Caco-2 (cell line): ENCODE measurements at regions of chr5 and their contacts with region 1.

Region 1: DNA sequence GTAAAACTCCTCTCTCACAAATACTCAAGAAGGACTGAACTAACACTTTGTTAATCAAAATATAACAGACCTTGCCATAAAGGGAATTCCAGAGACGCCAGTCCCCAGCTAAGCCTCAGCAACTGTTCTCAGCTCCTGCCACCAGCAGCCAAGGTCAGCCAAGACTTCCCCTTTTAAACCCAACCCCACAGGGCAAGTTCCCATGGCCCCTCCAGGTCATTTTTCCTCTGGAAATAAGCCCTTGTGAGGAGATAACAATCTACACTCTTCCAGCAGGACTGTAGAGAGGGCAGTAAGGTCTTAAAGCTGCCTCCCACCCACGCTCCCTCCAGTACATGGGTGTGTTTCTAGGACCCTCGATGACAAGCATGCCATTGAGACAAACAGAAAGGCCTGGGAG is 78.3 kb downstream of the DPYSL3 start:
- DNase-seq: peak; percentile 18 to 57
- H3K4me3 ChIP-seq: no peak overlapping the region
- H3K4me3 Mint-ChIP-seq: peak overlapping the region; percentile 57
- H3K27ac Mint-ChIP-seq: peak overlapping the region; percentile 48
- H3K4me1 ChIP-seq: peaks cover 56% of the 10 kb centered on the region
- H3K4me1 Mint-ChIP-seq: peaks cover 55% of the 10 kb centered on the region
- H3K27me3 ChIP-seq: no peaks in the 10 kb centered on the region
- H3K27me3 Mint-ChIP-seq: no peaks in the 10 kb centered on the region
- CTCF ChIP-seq: no peak

Region 2: GRCh38 chr5:147169399-147169798 is 262.2 kb before region 1 on chr5:
- CTCF ChIA-PET with region 1: no interaction called
- POLR2A ChIA-PET with region 1: no interaction called
- intact Hi-C with region 1: loop called (anchors 5 kb)
- DNase-seq: peak in 1 of 2 experiments; percentile 65
- H3K4me3 ChIP-seq: no peak overlapping the region
- H3K4me3 Mint-ChIP-seq: peak overlapping the region; percentile 18
- H3K27ac Mint-ChIP-seq: peak overlapping the region; percentile 97
- H3K4me1 ChIP-seq: peaks cover 69% of the 10 kb centered on the region
- H3K4me1 Mint-ChIP-seq: peaks cover 59% of the 10 kb centered on the region
- H3K27me3 ChIP-seq: no peaks in the 10 kb centered on the region
- H3K27me3 Mint-ChIP-seq: no peaks in the 10 kb centered on the region
- CTCF ChIP-seq: no peak

Region 3: DNA sequence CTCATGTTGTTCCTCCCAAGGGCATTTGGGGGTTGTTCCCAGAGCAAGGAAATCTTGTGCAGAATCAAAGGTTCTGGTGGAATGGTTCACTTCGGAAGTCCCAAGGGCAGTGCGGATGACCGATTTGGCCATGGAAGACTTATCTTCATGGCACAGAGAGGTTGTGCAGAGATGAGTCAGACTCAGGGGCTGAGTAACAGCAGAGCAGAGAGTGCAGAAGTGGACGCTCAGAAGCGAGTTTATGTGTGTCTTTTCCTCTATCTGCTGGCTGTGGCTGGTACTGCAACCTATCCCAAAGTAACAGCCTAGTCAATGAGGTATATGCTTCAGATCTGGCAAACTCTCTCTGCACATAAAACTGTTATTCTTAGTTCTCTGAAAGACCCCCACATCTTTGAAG is 39.8 kb before region 1 on chr5:
- CTCF ChIA-PET with region 1: no interaction called
- POLR2A ChIA-PET with region 1: no interaction called
- intact Hi-C with region 1: loop called (anchors 5 kb)
- DNase-seq: peak; percentile 47 to 54
- H3K4me3 ChIP-seq: no peak overlapping the region
- H3K4me3 Mint-ChIP-seq: no peak overlapping the region
- H3K27ac Mint-ChIP-seq: no peak overlapping the region
- H3K4me1 ChIP-seq: peaks cover 35% of the 10 kb centered on the region
- H3K4me1 Mint-ChIP-seq: peaks cover 36% of the 10 kb centered on the region
- H3K27me3 ChIP-seq: no peaks in the 10 kb centered on the region; the same call in 1 of the 2 replicates
- H3K27me3 Mint-ChIP-seq: no peaks in the 10 kb centered on the region
- CTCF ChIP-seq: peak; percentile 57 to 61

Region 4: DNA sequence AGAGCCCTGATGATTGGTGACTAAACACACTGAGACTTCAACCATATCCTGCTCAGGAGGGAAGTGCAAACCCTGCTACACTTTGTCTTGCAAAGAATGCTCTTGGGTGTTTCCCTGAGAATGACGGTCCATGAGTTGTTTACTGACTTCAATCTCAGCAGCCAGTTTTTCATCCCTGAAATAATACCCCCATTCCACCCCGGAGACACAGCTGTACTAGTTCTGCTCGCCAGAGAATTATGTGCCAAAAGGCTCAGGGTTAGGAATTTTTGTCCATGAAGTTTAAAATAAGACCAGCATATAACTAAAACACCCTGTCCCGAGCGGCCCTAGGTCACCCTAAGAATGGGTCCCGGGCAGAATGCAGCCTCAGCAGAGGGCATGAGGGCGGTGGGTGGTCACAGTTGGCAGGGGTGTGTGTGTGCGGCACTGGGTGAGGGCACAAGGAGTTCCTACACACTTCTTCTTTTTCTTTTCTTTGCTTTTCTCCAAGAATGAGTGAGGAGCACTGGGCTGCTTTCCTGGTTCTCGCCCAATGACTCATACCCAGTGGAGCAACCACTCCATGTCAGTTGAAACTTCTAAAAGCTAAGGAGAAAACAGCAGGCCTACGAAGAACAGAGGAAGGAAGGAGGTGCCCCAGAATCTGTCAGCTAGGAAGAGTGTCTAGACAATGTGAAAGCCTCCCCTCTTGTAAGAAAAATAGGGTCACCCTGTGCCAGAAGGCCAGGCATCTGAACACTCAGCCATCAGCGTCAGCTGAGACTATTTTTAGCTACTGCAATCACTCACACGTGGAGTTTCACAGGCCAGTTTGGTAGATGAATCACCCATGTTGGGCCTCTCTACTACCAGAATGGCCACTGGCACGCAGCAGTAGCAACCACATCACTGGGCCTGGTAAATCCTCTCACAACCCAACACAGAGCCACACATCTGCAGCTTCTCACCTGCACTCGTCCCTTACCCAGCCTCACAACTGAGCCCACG is 27.6 kb before region 1 on chr5:
- CTCF ChIA-PET with region 1: interaction called, 5 read pairs
- POLR2A ChIA-PET with region 1: interaction called, 3 read pairs
- intact Hi-C with region 1: loop called (anchors 1 kb)
- DNase-seq: no peak
- H3K4me3 ChIP-seq: no peak overlapping the region
- H3K4me3 Mint-ChIP-seq: no peak overlapping the region
- H3K27ac Mint-ChIP-seq: peak overlapping the region; percentile 74
- H3K4me1 ChIP-seq: peaks cover 83% of the 10 kb centered on the region
- H3K4me1 Mint-ChIP-seq: peaks cover 43% of the 10 kb centered on the region
- H3K27me3 ChIP-seq: no peaks in the 10 kb centered on the region
- H3K27me3 Mint-ChIP-seq: no peaks in the 10 kb centered on the region
- CTCF ChIP-seq: no peak

Region 5: GRCh38 chr5:147448766-147449165 is 17.2 kb after region 1 on chr5:
- CTCF ChIA-PET with region 1: interaction called, 10 read pairs
- POLR2A ChIA-PET with region 1: interaction called, 4 read pairs
- intact Hi-C with region 1: loop called (anchors 2 kb)
- DNase-seq: no peak
- H3K4me3 ChIP-seq: no peak overlapping the region
- H3K4me3 Mint-ChIP-seq: peak overlapping the region; percentile 51
- H3K27ac Mint-ChIP-seq: peak overlapping the region; percentile 29
- H3K4me1 ChIP-seq: peaks cover 40% of the 10 kb centered on the region
- H3K4me1 Mint-ChIP-seq: peaks cover 32% of the 10 kb centered on the region
- H3K27me3 ChIP-seq: no peaks in the 10 kb centered on the region
- H3K27me3 Mint-ChIP-seq: no peaks in the 10 kb centered on the region
- CTCF ChIP-seq: no peak

Region 6: GRCh38 chr5:147453875-147454814 is 22.6 kb after region 1 on chr5:
- CTCF ChIA-PET with region 1: interaction called, 10 read pairs
- POLR2A ChIA-PET with region 1: interaction called, 4 read pairs
- intact Hi-C with region 1: loop called (anchors 1 kb)
- DNase-seq: peak; percentile 88 to 94
- H3K4me3 ChIP-seq: peak overlapping the region; percentile 92
- H3K4me3 Mint-ChIP-seq: peak overlapping the region; percentile 85
- H3K27ac Mint-ChIP-seq: peak overlapping the region; percentile 73
- H3K4me1 ChIP-seq: peaks cover 29% of the 10 kb centered on the region
- H3K4me1 Mint-ChIP-seq: peaks cover 23% of the 10 kb centered on the region
- H3K27me3 ChIP-seq: no peaks in the 10 kb centered on the region
- H3K27me3 Mint-ChIP-seq: no peaks in the 10 kb centered on the region
- CTCF ChIP-seq: peak; percentile 93 to 95